Activated T-helper 1 cell treated with anti-CD3 and anti-CD28 coated beads, Interleukin-12 subunit alpha, Interleukin-12 subunit beta, Interleukin-2, Interleukin-4 antibody, amounts not matched to agents 30 ng/mL and 10 ng/mL and 1 ng/mL, durations not matched to agents 14 hours and 24 hours and 36 hours (primary cell): ENCODE measurements at regions of chr15 and their contacts with region 1.

Region 1: DNA sequence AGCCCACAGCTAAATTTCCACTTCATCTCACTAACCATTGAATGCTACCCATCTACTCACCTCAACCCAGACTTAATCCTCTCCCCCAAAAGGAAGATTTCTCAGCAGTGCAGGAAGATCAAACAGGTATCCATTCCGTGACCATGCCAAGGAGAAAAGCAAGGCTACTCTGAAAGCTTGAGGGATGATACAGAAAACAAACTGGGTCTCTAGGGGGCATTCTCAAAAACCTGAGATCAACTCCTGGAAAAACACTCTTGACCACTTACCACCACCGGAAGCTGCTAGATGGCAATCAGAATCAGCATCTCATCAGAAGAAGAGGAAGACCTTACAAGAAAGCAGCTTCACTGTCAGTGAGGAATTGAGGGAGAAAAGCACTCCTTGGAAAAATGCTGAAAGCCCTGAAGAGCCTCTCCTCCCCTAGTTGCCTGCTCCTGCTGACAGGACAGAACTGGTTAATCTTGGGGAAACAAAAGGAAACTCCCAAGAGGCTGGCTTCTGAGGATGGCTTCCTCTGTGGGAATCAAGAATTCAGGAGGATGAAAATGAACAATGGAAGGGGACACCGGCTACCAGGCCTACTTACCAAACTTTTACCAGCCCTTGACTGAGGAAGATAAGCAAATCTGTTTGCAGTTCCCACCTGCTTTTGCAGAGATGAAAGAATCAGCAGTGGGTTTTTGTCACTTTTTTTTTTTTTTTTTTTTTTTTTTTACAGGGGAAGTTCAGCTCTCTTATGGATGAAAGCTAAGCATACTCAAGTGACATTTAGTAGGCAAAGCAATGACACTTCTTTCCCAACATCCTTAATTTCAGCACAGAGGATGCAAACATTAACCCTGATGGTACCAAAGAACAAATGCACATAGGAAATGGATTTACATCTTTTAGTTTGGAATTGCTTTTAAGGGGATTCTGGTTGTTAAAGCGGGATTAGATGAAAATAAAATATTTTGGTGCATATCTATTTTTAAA is at the start of gene ATP8B4:
- DNase-seq: no peak
- H3K4me3 Mint-ChIP-seq: peak within 1 kb of the TSS; percentile 94
- H3K27ac Mint-ChIP-seq: peak within 1 kb of the TSS; percentile 95
- H3K4me1 Mint-ChIP-seq: peaks cover 65% of the 10 kb centered on the region
- H3K27me3 Mint-ChIP-seq: no peaks in the 10 kb centered on the region
- total RNA-seq, gene ATP8B4: 49.7 and 52.9 TPM in 2 replicates

Region 2: DNA sequence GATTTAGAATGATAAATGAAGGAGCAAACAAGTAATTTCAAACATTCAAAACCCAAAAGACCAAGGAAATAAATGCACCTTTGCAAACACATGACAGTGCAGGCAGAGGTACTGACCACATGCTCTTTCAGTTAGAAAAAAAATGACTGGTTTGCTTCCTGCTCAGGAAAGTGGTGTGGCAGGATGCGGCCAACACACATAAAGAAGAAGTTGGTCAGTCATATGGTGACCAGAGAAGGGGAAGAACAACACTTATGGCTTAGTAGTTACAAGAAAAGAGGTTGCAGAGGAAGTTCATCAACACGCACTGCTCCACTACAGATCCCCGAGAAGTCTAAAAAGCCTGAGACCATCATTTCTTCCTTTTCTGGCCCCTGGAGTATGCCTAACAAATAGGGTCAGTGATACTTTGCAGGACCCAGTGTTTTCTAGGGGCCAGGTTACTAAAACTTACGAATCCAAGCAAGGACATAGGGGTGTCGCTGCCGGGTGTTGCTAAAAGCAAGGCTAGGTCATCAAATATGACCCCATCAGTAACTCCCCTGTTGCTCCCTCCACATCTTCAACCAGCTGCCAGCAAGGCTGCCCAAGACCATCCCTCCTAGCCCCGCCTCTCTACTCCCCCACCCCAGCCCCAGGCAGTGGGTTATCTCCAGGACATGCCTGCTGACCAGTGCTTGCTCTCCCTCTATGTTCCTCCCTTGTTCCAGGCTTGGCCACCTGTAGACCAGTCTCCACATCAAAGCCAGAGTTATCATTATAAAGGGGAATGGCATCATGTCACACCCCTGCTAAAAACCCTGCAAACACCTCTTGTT is 11.6 kb before region 1 on chr15:
- intact Hi-C with region 1: loop called (anchors 1 kb)
- DNase-seq: peak; percentile 44
- H3K4me3 Mint-ChIP-seq: peak overlapping the region; percentile 75
- H3K27ac Mint-ChIP-seq: peak overlapping the region; percentile 93
- H3K4me1 Mint-ChIP-seq: peaks cover 93% of the 10 kb centered on the region
- H3K27me3 Mint-ChIP-seq: no peaks in the 10 kb centered on the region

Region 3: GRCh38 chr15:50176869-50177268 is 57.5 kb after region 1 on chr15:
- intact Hi-C with region 1: no loop called
- DNase-seq: no peak
- H3K4me3 Mint-ChIP-seq: no peak overlapping the region
- H3K27ac Mint-ChIP-seq: no peak overlapping the region
- H3K4me1 Mint-ChIP-seq: peaks cover 38% of the 10 kb centered on the region
- H3K27me3 Mint-ChIP-seq: no peaks in the 10 kb centered on the region